IMR-90 (cell line): ENCODE measurements at regions of chr19 and their contacts with region 1.

Region 1: GRCh38 chr19:9435279-9436268 is at the start of gene ZNF266:
- DNase-seq: peak; percentile 90
- ATAC-seq: peak; percentile 96
- H3K4me3 ChIP-seq: peak within 1 kb of the TSS; percentile 92
- H3K27ac ChIP-seq: peak within 1 kb of the TSS; percentile 88
- H3K4me1 ChIP-seq: no peaks in the 10 kb centered on the region; the same call in 1 of the 2 replicates
- H3K27me3 ChIP-seq: no peaks in the 10 kb centered on the region
- CTCF ChIP-seq: peak; percentile 71
- POLR2A ChIP-seq: peak; percentile 74; the same call in 1 of the 2 replicates
- RAD21 ChIP-seq: no peak
- total RNA-seq, gene ZNF266: 7.8 and 9.3 TPM in 2 replicates

Region 2: DNA sequence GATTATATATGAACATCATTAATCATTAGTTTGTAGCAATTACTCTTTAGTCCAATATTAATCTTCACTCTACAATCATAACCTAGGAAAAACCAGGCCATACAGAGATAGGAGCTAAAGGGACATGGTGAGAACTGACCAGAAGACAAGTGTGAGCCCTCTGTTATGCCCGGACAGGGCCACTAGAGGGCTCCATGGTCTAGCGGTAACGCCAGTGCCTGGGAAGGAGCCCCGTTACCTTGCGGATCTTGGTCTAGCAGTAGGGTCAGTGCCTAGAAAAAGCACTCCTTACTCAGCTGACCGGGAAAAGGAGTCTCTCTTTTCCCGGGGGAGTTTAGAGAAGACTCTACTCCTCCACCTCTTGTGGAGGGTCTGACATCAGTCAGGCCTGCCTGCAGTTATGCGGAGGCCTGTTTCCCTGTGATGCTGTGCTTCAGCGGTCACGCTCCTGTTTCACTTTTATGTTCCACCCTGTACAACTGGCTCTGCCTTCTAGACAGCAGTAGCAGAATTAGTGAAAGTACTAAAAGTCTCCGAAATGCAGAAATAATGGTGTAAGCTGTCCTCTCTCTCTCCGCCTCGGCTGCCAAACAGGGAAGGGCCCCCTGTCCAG is 230.0 kb before region 1 on chr19:
- CTCF ChIA-PET with region 1: no interaction called
- POLR2A ChIA-PET with region 1: no interaction called
- dilution Hi-C with region 1: no loop called
- in situ Hi-C with region 1: no loop called
- intact Hi-C with region 1: loop called (anchors 10 kb)
- DNase-seq: peak; percentile 54
- ATAC-seq: peak; percentile 97
- H3K4me3 ChIP-seq: peak overlapping the region; percentile 17
- H3K27ac ChIP-seq: no peak overlapping the region
- H3K4me1 ChIP-seq: no peaks in the 10 kb centered on the region
- H3K27me3 ChIP-seq: no peaks in the 10 kb centered on the region
- CTCF ChIP-seq: peak; percentile 72
- POLR2A ChIP-seq: no peak
- RAD21 ChIP-seq: peak; percentile 79

Region 3: DNA sequence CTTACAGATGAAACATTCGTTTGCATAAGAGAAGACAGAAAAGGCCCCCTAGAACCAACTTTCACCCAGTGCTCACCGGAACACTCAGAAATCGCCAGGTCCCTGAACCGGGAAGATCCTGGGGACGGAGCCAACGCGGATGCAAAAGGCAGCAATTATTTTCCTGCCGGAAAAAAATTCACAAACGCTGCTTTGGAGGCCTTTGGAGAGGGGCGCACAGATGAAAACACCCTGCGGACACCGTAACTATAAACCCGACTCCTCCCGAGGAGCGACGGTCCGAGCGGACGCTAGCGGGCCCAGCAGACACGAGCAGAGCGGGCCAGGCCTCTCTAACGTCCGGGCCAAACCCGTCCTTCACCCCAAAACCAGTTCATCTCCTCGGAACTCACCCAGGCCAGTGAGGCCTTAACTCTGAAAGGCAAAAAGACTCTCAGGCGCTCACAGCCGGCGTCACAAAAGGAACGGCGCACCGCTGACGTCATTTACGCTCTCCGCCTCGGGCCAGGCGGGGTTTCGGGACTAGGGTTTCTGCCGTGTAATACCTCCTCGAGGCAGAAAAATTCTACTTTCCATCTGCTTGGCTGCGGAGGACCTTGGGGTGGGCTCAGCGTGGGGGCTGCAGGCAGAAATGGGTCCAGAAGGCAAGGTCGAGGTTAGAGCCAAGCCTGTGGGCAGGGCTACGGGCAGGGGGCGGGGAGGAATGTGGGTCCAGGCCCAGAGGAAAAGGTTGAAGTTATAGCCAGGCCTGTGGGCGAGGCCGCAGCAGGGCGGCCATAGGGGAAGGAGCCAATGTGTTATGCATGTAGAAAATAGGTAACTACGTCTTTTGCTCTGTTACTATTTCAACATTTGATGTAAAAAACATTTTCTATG is 102.8 kb after region 1 on chr19 and contains the start of gene ZNF426:
- CTCF ChIA-PET with region 1: no interaction called
- POLR2A ChIA-PET with region 1: no interaction called
- dilution Hi-C with region 1: no loop called
- in situ Hi-C with region 1: no loop called
- intact Hi-C with region 1: loop called (anchors 5 kb)
- DNase-seq: peak; percentile 91
- ATAC-seq: peak; percentile 97
- H3K4me3 ChIP-seq: peak within 1 kb of the TSS; percentile 93
- H3K27ac ChIP-seq: peak within 1 kb of the TSS; percentile 98
- H3K4me1 ChIP-seq: no peaks in the 10 kb centered on the region
- H3K27me3 ChIP-seq: no peaks in the 10 kb centered on the region
- CTCF ChIP-seq: no peak
- POLR2A ChIP-seq: peak; percentile 84
- RAD21 ChIP-seq: 0 out of 2 replicates have a peak, but pooled peaks have one; percentile 4
- total RNA-seq, gene ZNF426: 25.0 and 30.1 TPM in 2 replicates

Region 4: GRCh38 chr19:9735986-9736385 is 300.4 kb after region 1 on chr19:
- CTCF ChIA-PET with region 1: no interaction called
- POLR2A ChIA-PET with region 1: no interaction called
- dilution Hi-C with region 1: no loop called
- in situ Hi-C with region 1: no loop called
- intact Hi-C with region 1: no loop called
- DNase-seq: no peak
- ATAC-seq: no peak
- H3K4me3 ChIP-seq: no peak overlapping the region
- H3K27ac ChIP-seq: no peak overlapping the region
- H3K4me1 ChIP-seq: no peaks in the 10 kb centered on the region
- H3K27me3 ChIP-seq: no peaks in the 10 kb centered on the region
- CTCF ChIP-seq: no peak
- POLR2A ChIP-seq: no peak
- RAD21 ChIP-seq: no peak